ENCODE measurements at regions of chr18 and their contacts with region 1.

Region 1: GRCh38 chr18:8988261-8988871 is 114.1 kb upstream of the NDUFV2 start:
- DNase-seq: peak; percentile 71
- ATAC-seq: peak; percentile 92
- H3K4me3 Mint-ChIP-seq: no peak overlapping the region
- H3K27ac Mint-ChIP-seq: no peak overlapping the region
- H3K4me1 Mint-ChIP-seq: no peaks in the 10 kb centered on the region
- H3K27me3 Mint-ChIP-seq: peaks cover 11% of the 10 kb centered on the region

Region 2: DNA sequence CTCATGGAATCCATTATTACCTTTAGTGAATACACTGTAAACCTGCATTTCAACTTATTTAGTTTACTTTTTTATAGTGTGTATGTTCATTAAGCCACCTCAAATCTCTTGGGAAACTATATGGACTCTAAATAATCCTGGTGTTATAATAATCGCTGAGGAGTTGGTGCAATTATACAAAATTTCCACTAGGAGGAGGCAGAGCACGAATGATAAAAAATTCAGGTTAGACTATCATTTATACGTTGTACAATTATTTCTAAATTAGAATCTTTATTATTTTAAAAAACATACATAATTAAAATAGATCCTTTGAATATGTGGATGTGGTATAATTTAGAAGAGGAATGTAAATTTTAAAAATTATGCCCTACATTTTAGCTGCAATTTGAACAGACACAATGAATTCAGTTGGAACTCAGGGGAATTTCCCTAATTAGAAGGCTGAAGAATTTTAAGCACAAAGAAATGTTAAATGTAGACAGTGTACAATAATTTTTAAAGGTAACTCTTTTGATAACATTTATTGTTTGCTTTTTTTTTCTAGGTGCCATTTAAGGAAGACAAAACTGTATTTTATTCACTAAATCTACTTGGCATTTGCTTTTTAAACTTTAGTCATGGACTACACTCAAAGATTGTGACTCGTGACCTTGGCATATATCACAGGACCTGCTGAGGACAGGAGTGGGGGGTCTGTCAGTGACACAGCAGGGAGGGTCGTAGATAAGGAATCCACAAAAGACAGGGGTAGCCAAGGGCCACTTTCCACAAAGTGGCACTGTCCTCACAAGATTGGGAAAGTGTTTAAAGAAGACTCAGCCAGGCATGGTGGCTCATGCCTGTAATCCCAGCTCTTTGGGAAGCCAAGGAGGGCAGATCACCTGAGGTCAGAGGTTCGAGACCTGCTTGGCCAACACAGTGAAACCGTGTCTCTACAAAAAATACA is 333.6 kb before region 1 on chr18:
- CTCF ChIA-PET with region 1: interaction called, 44 read pairs
- POLR2A ChIA-PET with region 1: no interaction called
- DNase-seq: no peak
- ATAC-seq: no peak
- H3K4me3 Mint-ChIP-seq: no peak overlapping the region
- H3K27ac Mint-ChIP-seq: no peak overlapping the region
- H3K4me1 Mint-ChIP-seq: no peaks in the 10 kb centered on the region
- H3K27me3 Mint-ChIP-seq: peaks cover 20% of the 10 kb centered on the region

Region 3: GRCh38 chr18:9017170-9017904 is 29.0 kb after region 1 on chr18:
- CTCF ChIA-PET with region 1: interaction called, 11 read pairs
- POLR2A ChIA-PET with region 1: no interaction called
- DNase-seq: peak; percentile 68
- ATAC-seq: peak; percentile 97
- H3K4me3 Mint-ChIP-seq: peak overlapping the region; percentile 56
- H3K27ac Mint-ChIP-seq: peak overlapping the region; percentile 43
- H3K4me1 Mint-ChIP-seq: peaks cover 24% of the 10 kb centered on the region
- H3K27me3 Mint-ChIP-seq: no peaks in the 10 kb centered on the region